K562 (cell line): ENCODE measurements at regions of chr3 and their contacts with region 1.

Region 1: GRCh38 chr3:36957862-36958686 is 13.2 kb upstream of the TRANK1 start:
- DNase-seq: peak; percentile 93 to 96 (median 94)
- ATAC-seq: peak; percentile 79
- H3K4me3 ChIP-seq: peak overlapping the region; percentile 10; the same call in 1 of the 2 replicates
- H3K27ac ChIP-seq: peak overlapping the region; percentile 79
- H3K4me1 ChIP-seq: peaks cover 22 to 51% of the 10 kb centered on the region in 2 experiments
- H3K27me3 ChIP-seq: no peaks in the 10 kb centered on the region
- CTCF ChIP-seq: peak in 1 of 3 experiments; percentile 29; a peak in 2 of 6 replicates
- EP300 ChIP-seq: peak; percentile 99
- POLR2A ChIP-seq: no peak
- RAD21 ChIP-seq: peak in 1 of 2 experiments; percentile 23; a peak in 2 of 4 replicates

Region 2: DNA sequence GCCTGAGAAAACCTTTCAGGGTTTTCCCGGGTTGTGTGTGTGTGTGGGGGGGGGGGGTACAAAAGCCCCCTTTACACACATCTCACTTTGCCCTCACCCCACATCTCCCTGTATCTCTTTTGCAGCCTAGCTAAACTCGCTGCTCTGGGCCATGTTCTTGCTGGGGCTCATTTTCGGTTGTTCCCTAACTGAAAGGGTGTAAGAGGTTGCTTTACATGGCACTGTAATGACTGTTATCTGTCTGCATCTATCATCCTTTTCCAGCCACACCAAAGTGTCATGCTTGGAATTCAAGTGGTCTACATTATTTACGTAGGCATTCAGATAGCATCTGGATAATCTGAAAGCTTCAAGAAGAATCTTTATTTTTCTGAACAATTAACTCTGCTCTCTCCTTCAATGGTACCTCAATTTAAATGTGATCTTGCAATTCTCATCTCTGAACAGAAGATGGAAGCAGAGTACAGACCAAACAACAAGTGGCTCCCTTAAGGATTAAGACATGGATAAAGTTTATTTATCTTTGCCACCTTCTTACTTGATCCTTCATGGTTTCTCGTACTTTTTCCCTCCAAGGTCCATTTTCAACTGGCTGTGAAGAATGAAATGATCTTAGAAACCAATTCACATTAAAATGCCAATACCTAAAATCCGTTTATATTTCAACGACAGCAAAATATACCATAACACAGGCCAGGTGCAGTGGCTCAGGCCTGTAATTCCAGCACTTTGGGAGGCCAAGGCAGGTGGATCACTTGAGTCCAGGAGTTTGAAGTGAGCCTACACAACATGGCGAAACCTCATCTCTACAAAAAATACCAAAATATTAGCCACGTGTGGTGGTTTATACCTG is 228.6 kb before region 1 on chr3:
- CTCF ChIA-PET with region 1: interaction called, 19 read pairs
- POLR2A ChIA-PET with region 1: no interaction called
- in situ Hi-C with region 1: loop called (anchors 10 kb)
- intact Hi-C with region 1: loop called (anchors 1 kb)
- DNase-seq: peak; percentile 43 to 58 (median 52)
- ATAC-seq: peak; percentile 86
- H3K4me3 ChIP-seq: no peak overlapping the region
- H3K27ac ChIP-seq: no peak overlapping the region
- H3K4me1 ChIP-seq: peaks cover 0 to 6% of the 10 kb centered on the region in 2 experiments; a peak in 2 of 5 replicates
- H3K27me3 ChIP-seq: peaks cover 0 to 16% of the 10 kb centered on the region in 2 experiments; a peak in 4 of 5 replicates
- CTCF ChIP-seq: peak; percentile 51 to 94 (median 79); a peak in 5 of 6 replicates
- EP300 ChIP-seq: no peak
- POLR2A ChIP-seq: no peak
- RAD21 ChIP-seq: peak; percentile 97

Region 3: GRCh38 chr3:36868614-36869436 is 89.2 kb before region 1 on chr3:
- CTCF ChIA-PET with region 1: interaction called, 3 read pairs
- POLR2A ChIA-PET with region 1: interaction called, 4 read pairs
- in situ Hi-C with region 1: no loop called
- intact Hi-C with region 1: loop called (anchors 1 kb)
- DNase-seq: peak; percentile 66 to 85 (median 74)
- ATAC-seq: peak; percentile 97
- H3K4me3 ChIP-seq: no peak overlapping the region
- H3K27ac ChIP-seq: no peak overlapping the region
- H3K4me1 ChIP-seq: no peaks in the 10 kb centered on the region
- H3K27me3 ChIP-seq: no peaks in the 10 kb centered on the region; a peak in 2 of 5 replicates
- CTCF ChIP-seq: peak; percentile 79 to 89 (median 88)
- EP300 ChIP-seq: no peak
- POLR2A ChIP-seq: no peak
- RAD21 ChIP-seq: peak; percentile 83 to 85

Region 4: GRCh38 chr3:36911990-36912804 is 45.9 kb before region 1 on chr3:
- CTCF ChIA-PET with region 1: interaction called, 4 read pairs
- POLR2A ChIA-PET with region 1: interaction called, 3 read pairs
- in situ Hi-C with region 1: no loop called
- intact Hi-C with region 1: loop called (anchors 1 kb)
- DNase-seq: peak in 2 of 4 experiments; percentile 57 to 59
- ATAC-seq: peak; percentile 65
- H3K4me3 ChIP-seq: no peak overlapping the region
- H3K27ac ChIP-seq: peak overlapping the region; percentile 49
- H3K4me1 ChIP-seq: peaks cover 20 to 26% of the 10 kb centered on the region in 2 experiments
- H3K27me3 ChIP-seq: no peaks in the 10 kb centered on the region
- CTCF ChIP-seq: no peak
- EP300 ChIP-seq: peak; percentile 48; the same call in 1 of the 2 replicates
- POLR2A ChIP-seq: no peak
- RAD21 ChIP-seq: no peak

Region 5: GRCh38 chr3:36993326-36994283 is 35.5 kb after region 1 on chr3 and contains the start of gene MLH1:
- CTCF ChIA-PET with region 1: interaction called, 4 read pairs
- POLR2A ChIA-PET with region 1: interaction called, 8 read pairs
- in situ Hi-C with region 1: no loop called
- intact Hi-C with region 1: loop called (anchors 1 kb)
- DNase-seq: peak; percentile 94 to 100 (median 99)
- ATAC-seq: peak; percentile 89
- H3K4me3 ChIP-seq: peak within 1 kb of the TSS; percentile 60
- H3K27ac ChIP-seq: peak within 1 kb of the TSS; percentile 94
- H3K4me1 ChIP-seq: peaks cover 16 to 21% of the 10 kb centered on the region in 2 experiments
- H3K27me3 ChIP-seq: no peaks in the 10 kb centered on the region
- CTCF ChIP-seq: no peak
- EP300 ChIP-seq: peak; percentile 74
- POLR2A ChIP-seq: peak; percentile 91
- RAD21 ChIP-seq: no peak
- polyA plus RNA-seq, gene MLH1: 81.6 to 134 TPM